ENCODE measurements at regions of chrX and their contacts with region 1.

Region 1: GRCh38 chrX:132740316-132741123 is 217.9 kb downstream of the HS6ST2 start:
- DNase-seq: no peak
- ATAC-seq: no peak
- H3K4me3 ChIP-seq: no peak overlapping the region
- H3K4me3 Mint-ChIP-seq: no peak overlapping the region
- H3K27ac ChIP-seq: no peak overlapping the region
- H3K27ac Mint-ChIP-seq: no peak overlapping the region
- H3K4me1 ChIP-seq: peaks cover 0 to 11% of the 10 kb centered on the region in 2 donors
- H3K4me1 Mint-ChIP-seq: peaks cover 6 to 39% (median 19%) of the 10 kb centered on the region in 7 donors
- H3K27me3 ChIP-seq: no peaks in the 10 kb centered on the region
- H3K27me3 Mint-ChIP-seq: no peaks in the 10 kb centered on the region

Region 2: GRCh38 chrX:132957211-132958090 is 216.9 kb after region 1 on chrX:
- CTCF ChIA-PET with region 1: no interaction called
- POLR2A ChIA-PET with region 1: no interaction called
- intact Hi-C with region 1: loop called in 1 of 2 experiments (anchors 10 kb)
- DNase-seq: peak in 3 of 9 donors; percentile 7 to 27 (median 9)
- ATAC-seq: peak; percentile 31
- H3K4me3 ChIP-seq: no peak overlapping the region
- H3K4me3 Mint-ChIP-seq: peak overlapping the region; percentile 34 to 80 (median 68)
- H3K27ac ChIP-seq: no peak overlapping the region
- H3K27ac Mint-ChIP-seq: no peak overlapping the region
- H3K4me1 ChIP-seq: no peaks in the 10 kb centered on the region
- H3K4me1 Mint-ChIP-seq: peaks cover 0 to 10% (median 5%) of the 10 kb centered on the region in 7 donors
- H3K27me3 ChIP-seq: no peaks in the 10 kb centered on the region
- H3K27me3 Mint-ChIP-seq: peaks cover 6 to 46% (median 23%) of the 10 kb centered on the region in 5 donors